ENCODE measurements at regions of chr7 and their contacts with region 1.

Region 1: GRCh38 chr7:43679210-43680068 is 49.9 kb downstream of the COA1 start:
- DNase-seq: peak in 1 of 35 experiments; percentile 14
- ATAC-seq: peak in 2 of 4 experiments; percentile 32 to 52
- H3K4me3 ChIP-seq: peak overlapping the region in 1 of 2 donors; percentile 44
- H3K4me3 Mint-ChIP-seq: peak overlapping the region in 1 of 3 donors; percentile 33
- H3K27ac ChIP-seq: peak overlapping the region; percentile 8
- H3K27ac Mint-ChIP-seq: peak overlapping the region; percentile 84 to 89
- H3K4me1 ChIP-seq: peaks cover 13 to 29% of the 10 kb centered on the region in 2 experiments
- H3K4me1 Mint-ChIP-seq: peaks cover 74 to 84% (median 83%) of the 10 kb centered on the region in 3 donors
- H3K27me3 ChIP-seq: no peaks in the 10 kb centered on the region
- H3K27me3 Mint-ChIP-seq: no peaks in the 10 kb centered on the region

Region 2: DNA sequence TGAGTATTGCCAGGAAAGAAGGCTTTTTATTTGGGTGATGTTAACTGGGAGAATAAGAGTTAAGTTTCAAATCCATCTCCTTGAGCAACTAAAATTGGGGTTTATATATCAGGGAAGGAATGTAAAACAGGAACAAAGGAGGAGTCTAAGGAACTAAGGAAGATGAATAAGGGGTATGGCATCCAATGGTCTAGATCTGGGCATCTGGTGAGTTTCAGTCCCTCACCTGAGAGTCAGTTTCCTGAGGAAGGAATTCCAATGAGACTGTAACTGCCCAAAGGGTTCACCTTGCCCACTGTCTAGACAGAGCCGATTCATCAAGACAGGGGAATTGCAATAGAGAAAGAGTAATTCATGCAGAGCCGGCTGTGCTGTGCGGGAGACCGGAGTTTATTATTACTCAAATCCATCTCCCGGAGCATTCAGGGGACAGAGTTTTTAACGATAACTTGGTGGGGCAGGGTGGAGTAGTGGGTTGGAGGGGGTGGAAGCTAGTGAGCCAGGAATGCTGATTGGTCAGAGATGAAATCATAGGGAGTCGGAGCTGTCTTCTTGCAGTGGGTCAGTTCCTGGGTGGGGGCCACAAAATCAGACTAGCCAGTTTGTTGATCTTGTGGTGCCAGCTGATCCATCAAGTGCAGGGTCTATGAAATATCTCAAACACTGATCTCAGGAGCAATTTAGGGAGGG is 284.9 kb before region 1 on chr7:
- CTCF ChIA-PET with region 1: no interaction called
- POLR2A ChIA-PET with region 1: interaction called in 1 of 2 experiments, 10 read pairs
- DNase-seq: no peak
- ATAC-seq: no peak
- H3K4me3 ChIP-seq: no peak overlapping the region
- H3K4me3 Mint-ChIP-seq: no peak overlapping the region
- H3K27ac ChIP-seq: no peak overlapping the region
- H3K27ac Mint-ChIP-seq: no peak overlapping the region
- H3K4me1 ChIP-seq: no peaks in the 10 kb centered on the region
- H3K4me1 Mint-ChIP-seq: no peaks in the 10 kb centered on the region
- H3K27me3 ChIP-seq: no peaks in the 10 kb centered on the region
- H3K27me3 Mint-ChIP-seq: peaks cover 21 to 28% of the 10 kb centered on the region in 2 donors

Region 3: DNA sequence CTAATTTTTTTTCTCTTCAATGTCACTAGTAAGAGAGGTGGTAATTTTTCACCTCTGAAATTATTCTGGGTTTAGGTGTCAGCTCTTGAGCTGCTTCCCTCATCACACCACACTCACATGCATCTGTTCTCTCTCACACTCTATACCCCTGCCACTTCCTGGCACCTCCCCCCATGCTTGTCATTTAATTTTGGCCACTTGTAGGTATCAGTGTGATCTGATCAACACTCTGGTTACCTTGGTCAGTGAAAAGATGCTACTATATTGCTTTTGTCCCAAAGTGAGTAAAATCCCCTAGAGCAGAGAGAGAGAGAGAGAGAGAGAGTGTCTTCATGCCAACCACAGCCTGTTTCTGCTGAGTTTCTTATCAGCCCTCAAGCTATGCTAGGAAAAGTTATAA is 54.0 kb before region 1 on chr7:
- CTCF ChIA-PET with region 1: no interaction called
- POLR2A ChIA-PET with region 1: interaction called in 1 of 2 experiments, 11 read pairs
- DNase-seq: peak in 33 of 35 experiments; percentile 33 to 83 (median 69)
- ATAC-seq: peak; percentile 64 to 74 (median 73)
- H3K4me3 ChIP-seq: no peak overlapping the region
- H3K4me3 Mint-ChIP-seq: peak overlapping the region; percentile 29 to 55 (median 52)
- H3K27ac ChIP-seq: peak overlapping the region; percentile 76
- H3K27ac Mint-ChIP-seq: peak overlapping the region; percentile 85 to 87
- H3K4me1 ChIP-seq: peaks cover 45 to 82% of the 10 kb centered on the region in 2 experiments
- H3K4me1 Mint-ChIP-seq: peaks cover 62 to 91% (median 91%) of the 10 kb centered on the region in 3 donors
- H3K27me3 ChIP-seq: no peaks in the 10 kb centered on the region
- H3K27me3 Mint-ChIP-seq: no peaks in the 10 kb centered on the region

Region 4: DNA sequence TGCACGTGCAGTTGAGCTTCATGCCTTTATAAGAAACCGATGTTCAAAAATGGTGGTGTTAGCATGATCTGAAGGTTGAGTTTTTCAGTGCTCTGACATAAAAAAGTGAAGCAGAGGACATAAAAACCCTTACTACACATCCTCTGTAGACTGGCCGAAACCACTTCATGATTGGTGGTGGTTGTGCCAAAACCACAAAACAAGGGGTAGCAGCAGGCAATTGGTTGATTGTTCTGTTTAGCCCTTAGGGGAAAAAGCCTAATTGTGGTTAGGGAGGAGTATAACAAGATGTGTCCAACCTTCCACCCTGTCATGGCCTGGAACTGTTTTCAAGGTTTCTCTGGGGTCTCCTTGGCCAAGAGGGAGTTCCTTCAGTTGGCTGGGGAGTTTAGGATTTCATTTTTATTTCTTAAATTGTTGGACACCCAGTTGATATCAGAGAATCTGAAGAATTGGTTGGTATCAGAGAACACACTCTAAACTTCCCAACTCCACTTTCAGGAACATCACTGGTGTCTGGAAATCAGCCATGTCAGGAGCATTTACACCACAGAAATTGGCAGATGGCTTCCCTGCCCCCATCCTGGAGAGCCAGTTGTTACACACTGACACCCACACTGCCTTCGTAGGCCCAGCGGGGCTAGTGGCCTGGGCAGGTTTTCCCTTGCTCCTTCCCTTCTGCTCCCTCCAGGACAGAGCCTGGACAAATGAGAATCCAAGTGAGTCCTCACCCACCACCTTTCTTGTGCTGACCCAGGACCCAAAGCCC is 171.1 kb after region 1 on chr7:
- CTCF ChIA-PET with region 1: no interaction called
- POLR2A ChIA-PET with region 1: no interaction called
- DNase-seq: no peak
- ATAC-seq: no peak
- H3K4me3 ChIP-seq: no peak overlapping the region
- H3K4me3 Mint-ChIP-seq: no peak overlapping the region
- H3K27ac ChIP-seq: no peak overlapping the region
- H3K27ac Mint-ChIP-seq: no peak overlapping the region
- H3K4me1 ChIP-seq: no peaks in the 10 kb centered on the region
- H3K4me1 Mint-ChIP-seq: peaks cover 0 to 3% (median 0%) of the 10 kb centered on the region in 3 donors
- H3K27me3 ChIP-seq: peaks cover 0 to 10% of the 10 kb centered on the region in 2 experiments
- H3K27me3 Mint-ChIP-seq: peaks cover 3 to 6% of the 10 kb centered on the region in 2 donors

Region 5: DNA sequence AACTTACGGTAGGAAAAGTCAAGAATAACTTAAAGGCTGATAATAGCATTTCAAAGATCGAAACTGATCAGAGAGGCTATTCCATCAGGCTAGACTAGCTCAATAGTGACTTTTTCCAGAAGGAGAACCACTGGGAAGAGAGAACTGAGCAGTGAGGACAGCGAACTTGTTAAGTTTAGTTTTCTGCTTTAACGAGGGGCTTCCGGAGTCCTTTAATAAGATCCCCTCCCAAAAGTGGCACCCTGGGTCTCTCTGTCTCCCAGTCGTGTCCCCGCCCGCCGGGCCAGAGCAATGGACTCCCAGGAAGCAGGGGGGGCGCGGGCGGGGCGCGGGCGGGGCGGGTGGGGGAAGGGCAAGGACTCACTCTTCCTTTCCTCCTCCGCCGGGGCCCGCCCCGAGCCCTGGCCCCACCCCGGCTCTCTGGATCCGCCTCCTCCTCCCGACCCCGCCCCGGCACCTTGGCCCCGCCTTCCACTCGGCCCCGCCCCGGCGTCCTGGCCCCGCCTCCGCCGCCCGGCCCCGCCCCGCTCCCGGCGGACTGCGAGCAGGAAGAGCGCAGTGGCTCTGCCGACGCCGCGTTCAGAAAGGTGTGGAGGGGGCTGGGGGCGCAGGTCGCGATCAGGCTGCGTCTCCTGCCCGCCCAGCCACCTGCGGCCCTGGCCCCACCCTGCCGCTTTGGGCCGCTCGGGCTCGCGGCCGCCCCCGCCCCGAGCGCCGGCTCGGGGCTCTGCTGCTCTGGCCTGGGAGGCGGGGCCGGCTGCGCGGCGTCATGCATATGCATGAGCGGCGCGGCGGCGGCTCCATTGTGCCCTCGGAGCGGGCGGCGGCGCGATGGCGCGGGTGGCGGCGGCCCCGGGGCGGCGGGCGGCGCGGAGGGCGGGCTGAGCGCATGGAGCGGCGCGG is 1068.9 kb after region 1 on chr7 and contains the start of gene ZMIZ2:
- CTCF ChIA-PET with region 1: no interaction called
- POLR2A ChIA-PET with region 1: no interaction called
- DNase-seq: peak; percentile 81 to 97 (median 88)
- ATAC-seq: peak; percentile 82 to 94 (median 88)
- H3K4me3 ChIP-seq: peak within 1 kb of the TSS; percentile 77 to 80
- H3K4me3 Mint-ChIP-seq: peak within 1 kb of the TSS; percentile 75 to 85 (median 83)
- H3K27ac ChIP-seq: peak within 1 kb of the TSS; percentile 85
- H3K27ac Mint-ChIP-seq: peak within 1 kb of the TSS; percentile 90 to 97
- H3K4me1 ChIP-seq: peaks cover 27 to 28% of the 10 kb centered on the region in 2 experiments
- H3K4me1 Mint-ChIP-seq: peaks cover 38 to 54% (median 43%) of the 10 kb centered on the region in 3 donors
- H3K27me3 ChIP-seq: no peaks in the 10 kb centered on the region
- H3K27me3 Mint-ChIP-seq: no peaks in the 10 kb centered on the region
- total RNA-seq, gene ZMIZ2: 112 to 172 (median 145) TPM

Measured in T-cell (primary cell).